ENCODE measurements at regions of chr20 and their contacts with region 1.

Region 1: DNA sequence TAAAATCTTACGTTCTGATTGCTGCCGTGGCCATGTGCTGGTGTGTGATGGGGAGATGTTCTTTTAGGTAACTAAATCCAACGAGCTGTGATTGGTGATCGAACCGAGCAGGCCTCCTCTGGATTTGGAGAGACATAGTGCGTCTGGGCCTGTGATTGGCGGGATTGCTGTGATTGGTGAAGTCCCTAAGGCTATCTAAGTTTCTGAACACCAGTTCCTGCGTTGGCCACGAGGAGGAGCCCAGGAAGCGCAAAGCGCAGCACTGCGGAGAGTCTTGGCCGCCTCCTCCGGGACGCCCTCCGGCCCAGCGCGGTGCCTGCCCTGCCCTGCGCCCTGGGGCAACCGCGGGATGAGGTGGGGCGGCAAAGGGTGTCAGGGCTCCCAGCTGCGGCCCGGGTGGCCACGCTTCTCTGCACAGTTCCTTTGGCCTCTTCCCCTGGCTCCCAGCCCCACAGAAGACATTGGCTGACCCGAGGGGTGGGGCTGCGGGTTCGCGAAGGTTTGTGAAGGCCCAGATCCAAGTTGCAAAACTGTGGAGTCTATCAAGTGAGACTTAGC is 33.0 kb downstream of the HNF4A start:
- DNase-seq: peak; percentile 48 to 84 (median 76)
- H3K4me3 ChIP-seq: no peak overlapping the region
- H3K27ac ChIP-seq: no peak overlapping the region
- H3K4me1 ChIP-seq: peaks cover 0 to 5% of the 10 kb centered on the region in 2 donors
- H3K27me3 ChIP-seq: no peaks in the 10 kb centered on the region
- CTCF ChIP-seq: peak; percentile 53 to 81 (median 74)
- POLR2A ChIP-seq: no peak

Region 2: DNA sequence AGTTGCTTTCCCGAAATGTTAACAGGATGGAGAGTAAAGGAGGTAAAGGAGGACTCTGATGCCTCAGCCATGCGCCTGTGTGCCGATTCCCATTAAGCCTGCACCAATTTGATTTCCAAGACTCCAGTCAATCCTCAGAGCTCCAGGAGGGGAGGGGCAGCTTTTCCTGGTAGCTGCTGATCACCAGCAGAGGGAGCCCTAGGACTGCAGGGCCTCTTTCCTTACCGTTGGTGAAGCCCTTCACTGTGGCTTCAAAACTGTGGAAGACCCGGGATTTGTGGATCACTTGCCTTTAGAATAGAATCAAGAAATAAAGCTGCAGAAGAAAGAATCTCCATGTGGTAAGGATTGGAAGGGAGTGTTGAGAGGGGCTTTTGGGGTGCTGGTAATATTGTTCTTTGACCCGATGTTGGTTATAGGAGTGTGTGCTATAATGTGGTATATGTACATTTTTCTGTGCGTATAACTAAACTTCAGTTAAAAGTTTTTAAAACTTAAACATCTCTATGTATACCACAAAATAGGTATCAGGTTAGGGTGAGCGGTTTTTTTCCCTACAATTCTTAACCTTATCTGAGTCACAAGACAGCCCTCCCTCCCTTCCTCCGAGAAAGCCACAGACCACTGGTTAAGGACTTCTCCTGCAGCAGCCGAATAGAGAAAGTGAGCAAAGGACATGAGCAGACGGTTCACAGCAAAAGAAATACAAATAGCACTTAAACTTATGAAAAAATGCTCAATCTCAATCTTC is 171.0 kb before region 1 on chr20:
- intact Hi-C with region 1: loop called (anchors 5 kb)
- DNase-seq: peak; percentile 65 to 88 (median 79)
- H3K4me3 ChIP-seq: no peak overlapping the region
- H3K27ac ChIP-seq: no peak overlapping the region
- H3K4me1 ChIP-seq: no peaks in the 10 kb centered on the region
- H3K27me3 ChIP-seq: no peaks in the 10 kb centered on the region
- CTCF ChIP-seq: peak; percentile 80 to 91 (median 88)
- POLR2A ChIP-seq: no peak

Region 3: GRCh38 chr20:44460795-44461141 is 72.2 kb after region 1 on chr20:
- intact Hi-C with region 1: loop called (anchors 2 to 5 kb)
- DNase-seq: peak in 1 of 7 donors; percentile 38
- H3K4me3 ChIP-seq: no peak overlapping the region
- H3K27ac ChIP-seq: no peak overlapping the region
- H3K4me1 ChIP-seq: no peaks in the 10 kb centered on the region
- H3K27me3 ChIP-seq: no peaks in the 10 kb centered on the region
- CTCF ChIP-seq: peak; percentile 27 to 76 (median 62)
- POLR2A ChIP-seq: no peak

Region 4: GRCh38 chr20:44615169-44615791 is 226.7 kb after region 1 on chr20:
- intact Hi-C with region 1: loop called in 1 of 2 experiments (anchors 5 kb)
- DNase-seq: no peak
- H3K4me3 ChIP-seq: no peak overlapping the region
- H3K27ac ChIP-seq: peak overlapping the region in 3 of 5 donors; percentile 18 to 57 (median 38)
- H3K4me1 ChIP-seq: peaks cover 0 to 33% of the 10 kb centered on the region in 2 donors
- H3K27me3 ChIP-seq: no peaks in the 10 kb centered on the region
- CTCF ChIP-seq: no peak
- POLR2A ChIP-seq: no peak

Region 5: GRCh38 chr20:44733341-44734069 is 345.0 kb after region 1 on chr20:
- intact Hi-C with region 1: loop called in 1 of 2 experiments (anchors 10 kb)
- DNase-seq: peak; percentile 66 to 88 (median 80)
- H3K4me3 ChIP-seq: no peak overlapping the region
- H3K27ac ChIP-seq: no peak overlapping the region
- H3K4me1 ChIP-seq: peaks cover 14 to 20% of the 10 kb centered on the region in 2 donors
- H3K27me3 ChIP-seq: no peaks in the 10 kb centered on the region
- CTCF ChIP-seq: peak; percentile 92 to 97 (median 96)
- POLR2A ChIP-seq: no peak

Region 6: GRCh38 chr20:44805979-44806620 is 417.6 kb after region 1 on chr20:
- intact Hi-C with region 1: no loop called
- DNase-seq: peak in 6 of 7 donors; percentile 13 to 90 (median 25)
- H3K4me3 ChIP-seq: no peak overlapping the region
- H3K27ac ChIP-seq: peak overlapping the region in 1 of 5 donors; percentile 41
- H3K4me1 ChIP-seq: no peaks in the 10 kb centered on the region
- H3K27me3 ChIP-seq: peaks cover 21% of the 10 kb centered on the region
- CTCF ChIP-seq: no peak
- POLR2A ChIP-seq: no peak